Activated T-helper 2 cell treated with anti-CD3 and anti-CD28 coated beads, Interferon-gamma antibody, Interleukin-2, Interleukin-4, amounts not matched to agents 10 μg/mL and 5 μg/mL and 100 μg/mL, durations not matched to agents 14 hours and 24 hours and 36 hours (primary cell): ENCODE measurements at regions of chr19 and their contacts with region 1.

Region 1: DNA sequence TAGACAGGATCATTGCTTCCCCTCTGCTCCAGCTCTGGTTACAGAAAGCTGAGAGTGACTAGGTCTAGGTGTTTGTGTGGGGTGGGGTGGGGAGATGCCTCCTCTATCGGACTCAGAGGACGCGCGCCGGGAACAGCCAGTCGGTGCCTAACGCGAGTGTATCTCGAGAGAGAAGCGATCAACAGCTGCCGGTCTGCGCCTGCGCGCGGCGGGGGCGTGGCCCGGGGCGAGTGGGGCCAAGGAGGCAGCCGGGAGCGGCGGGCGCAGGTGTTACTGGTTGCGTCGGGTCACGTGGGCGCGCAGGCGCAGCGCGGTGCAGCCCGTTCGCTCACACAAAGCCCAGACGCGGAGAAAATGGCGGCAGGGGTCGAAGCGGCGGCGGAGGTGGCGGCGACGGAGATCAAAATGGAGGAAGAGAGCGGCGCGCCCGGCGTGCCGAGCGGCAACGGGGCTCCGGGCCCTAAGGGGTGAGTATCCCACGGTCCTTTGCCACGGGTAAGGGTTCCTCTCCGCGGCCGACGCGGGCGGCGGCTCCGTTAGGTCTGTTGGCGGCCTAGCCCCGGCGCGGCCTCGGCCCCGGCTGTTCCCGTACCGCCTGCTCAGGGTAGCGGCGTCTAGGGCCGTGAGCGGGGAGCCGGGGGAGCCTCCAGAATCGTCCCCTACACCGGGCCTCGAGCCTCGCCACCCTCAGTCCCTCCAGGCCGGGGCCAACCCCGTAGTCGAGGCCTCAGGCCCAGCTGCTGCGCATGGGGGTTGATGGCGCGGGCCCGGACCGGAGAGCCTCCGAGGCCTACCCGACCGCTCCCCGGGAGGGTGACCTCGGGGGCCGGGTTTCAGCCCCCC is at the start of gene HNRNPM:
- DNase-seq: peak; percentile 100
- H3K4me3 Mint-ChIP-seq: peak within 1 kb of the TSS; percentile 98
- H3K27ac Mint-ChIP-seq: peak within 1 kb of the TSS; percentile 98
- H3K4me1 Mint-ChIP-seq: peaks cover 32% of the 10 kb centered on the region
- H3K27me3 Mint-ChIP-seq: no peaks in the 10 kb centered on the region
- total RNA-seq, gene HNRNPM: 336 and 347 TPM in 2 replicates

Region 2: GRCh38 chr19:8050274-8051096 is 394.4 kb before region 1 on chr19:
- intact Hi-C with region 1: loop called (anchors 5 kb)
- DNase-seq: peak; percentile 73
- H3K4me3 Mint-ChIP-seq: peak overlapping the region; percentile 37
- H3K27ac Mint-ChIP-seq: no peak overlapping the region
- H3K4me1 Mint-ChIP-seq: peaks cover 11% of the 10 kb centered on the region
- H3K27me3 Mint-ChIP-seq: no peaks in the 10 kb centered on the region

Region 3: GRCh38 chr19:8377598-8377997 is 67.3 kb before region 1 on chr19:
- intact Hi-C with region 1: no loop called
- DNase-seq: no peak
- H3K4me3 Mint-ChIP-seq: no peak overlapping the region
- H3K27ac Mint-ChIP-seq: no peak overlapping the region
- H3K4me1 Mint-ChIP-seq: peaks cover 4% of the 10 kb centered on the region
- H3K27me3 Mint-ChIP-seq: peaks cover 3% of the 10 kb centered on the region

Region 4: GRCh38 chr19:8389891-8390616 is 54.8 kb before region 1 on chr19 and contains the start of gene RAB11B:
- intact Hi-C with region 1: loop called (anchors 2 kb)
- DNase-seq: peak; percentile 99
- H3K4me3 Mint-ChIP-seq: peak within 1 kb of the TSS; percentile 91
- H3K27ac Mint-ChIP-seq: peak within 1 kb of the TSS; percentile 96
- H3K4me1 Mint-ChIP-seq: peaks cover 16% of the 10 kb centered on the region
- H3K27me3 Mint-ChIP-seq: no peaks in the 10 kb centered on the region
- total RNA-seq, gene RAB11B: 85.9 and 86.1 TPM in 2 replicates

Region 5: GRCh38 chr19:8423817-8424223 is 21.0 kb before region 1 on chr19:
- intact Hi-C with region 1: no loop called
- DNase-seq: no peak
- H3K4me3 Mint-ChIP-seq: no peak overlapping the region
- H3K27ac Mint-ChIP-seq: no peak overlapping the region
- H3K4me1 Mint-ChIP-seq: no peaks in the 10 kb centered on the region
- H3K27me3 Mint-ChIP-seq: no peaks in the 10 kb centered on the region

Region 6: GRCh38 chr19:8459520-8460259 is 14.8 kb after region 1 on chr19:
- intact Hi-C with region 1: no loop called
- DNase-seq: no peak
- H3K4me3 Mint-ChIP-seq: no peak overlapping the region
- H3K27ac Mint-ChIP-seq: no peak overlapping the region
- H3K4me1 Mint-ChIP-seq: peaks cover 39% of the 10 kb centered on the region
- H3K27me3 Mint-ChIP-seq: no peaks in the 10 kb centered on the region

Region 7: GRCh38 chr19:8473648-8474476 is 29.0 kb after region 1 on chr19:
- intact Hi-C with region 1: no loop called
- DNase-seq: no peak
- H3K4me3 Mint-ChIP-seq: no peak overlapping the region
- H3K27ac Mint-ChIP-seq: peak overlapping the region; percentile 62
- H3K4me1 Mint-ChIP-seq: peaks cover 27% of the 10 kb centered on the region
- H3K27me3 Mint-ChIP-seq: no peaks in the 10 kb centered on the region